ENCODE measurements at regions of chr9 and their contacts with region 1.

Region 1: GRCh38 chr9:34948451-34948850 is 9.6 kb upstream of the PHF24 start:
- DNase-seq: no peak
- ATAC-seq: no peak
- H3K4me3 Mint-ChIP-seq: no peak overlapping the region
- H3K27ac Mint-ChIP-seq: no peak overlapping the region
- H3K4me1 Mint-ChIP-seq: no peaks in the 10 kb centered on the region
- H3K27me3 Mint-ChIP-seq: peaks cover 15% of the 10 kb centered on the region

Region 2: GRCh38 chr9:35374436-35374835 is 426.0 kb after region 1 on chr9:
- CTCF ChIA-PET with region 1: no interaction called
- POLR2A ChIA-PET with region 1: no interaction called
- intact Hi-C with region 1: loop called in 1 of 2 experiments (anchors 5 kb)
- DNase-seq: no peak
- ATAC-seq: no peak
- H3K4me3 Mint-ChIP-seq: no peak overlapping the region
- H3K27ac Mint-ChIP-seq: no peak overlapping the region
- H3K4me1 Mint-ChIP-seq: no peaks in the 10 kb centered on the region
- H3K27me3 Mint-ChIP-seq: no peaks in the 10 kb centered on the region

Measured in activated CD4-positive, alpha-beta T cell treated with anti-CD3 and anti-CD28 coated beads for 36 hours (primary cell).